ENCODE measurements at regions of chr6 and their contacts with region 1.

Region 1: GRCh38 chr6:157379656-157380454 is 1.1 kb upstream of the ZDHHC14 start:
- DNase-seq: peak; percentile 65
- ATAC-seq: peak; percentile 86
- H3K4me3 ChIP-seq: peak overlapping the region; percentile 98
- H3K27ac ChIP-seq: peak overlapping the region; percentile 50; the same call in 1 of the 2 replicates
- H3K4me1 ChIP-seq: no peaks in the 10 kb centered on the region
- H3K27me3 ChIP-seq: peaks cover 0 to 4% of the 10 kb centered on the region in 2 experiments; a peak in 1 of 4 replicates
- CTCF ChIP-seq: no peak
- EP300 ChIP-seq: no peak
- POLR2A ChIP-seq: 0 out of 2 replicates have a peak, but pooled peaks have one; percentile 42
- RAD21 ChIP-seq: no peak

Region 2: DNA sequence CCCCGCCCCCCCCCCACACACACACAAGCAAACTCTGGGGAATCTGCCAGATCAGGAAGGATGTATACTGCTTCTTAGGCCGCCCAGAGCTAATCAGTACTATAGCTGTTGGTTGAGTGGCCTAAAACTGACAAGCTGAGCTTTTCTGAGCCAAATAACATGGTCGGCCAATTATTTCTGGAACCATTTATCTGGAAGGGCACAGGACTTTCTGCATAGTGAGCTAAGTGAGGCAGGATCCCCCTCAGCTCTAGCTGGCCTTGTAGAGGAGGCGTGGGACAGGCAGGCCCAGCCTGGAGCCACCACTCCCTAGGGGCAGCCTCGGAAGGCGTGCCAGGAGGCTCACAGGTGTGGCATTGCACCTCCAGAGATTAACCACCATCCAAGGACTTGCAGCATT is 256.6 kb before region 1 on chr6:
- CTCF ChIA-PET with region 1: no interaction called
- POLR2A ChIA-PET with region 1: no interaction called
- RAD21 ChIA-PET with region 1: no interaction called
- SMC1A ChIA-PET with region 1: no interaction called
- in situ Hi-C with region 1: no loop called
- intact Hi-C with region 1: no loop called
- DNase-seq: no peak
- ATAC-seq: no peak
- H3K4me3 ChIP-seq: no peak overlapping the region
- H3K27ac ChIP-seq: no peak overlapping the region
- H3K4me1 ChIP-seq: no peaks in the 10 kb centered on the region
- H3K27me3 ChIP-seq: no peaks in the 10 kb centered on the region
- CTCF ChIP-seq: no peak
- EP300 ChIP-seq: no peak
- POLR2A ChIP-seq: no peak
- RAD21 ChIP-seq: no peak

Region 3: GRCh38 chr6:157368359-157369049 is 11.4 kb before region 1 on chr6:
- CTCF ChIA-PET with region 1: interaction called, 6 read pairs
- POLR2A ChIA-PET with region 1: interaction called, 16 read pairs
- RAD21 ChIA-PET with region 1: interaction called, 6 read pairs
- SMC1A ChIA-PET with region 1: interaction called, 17 read pairs
- in situ Hi-C with region 1: no loop called
- intact Hi-C with region 1: no loop called
- DNase-seq: no peak
- ATAC-seq: peak; percentile 49
- H3K4me3 ChIP-seq: no peak overlapping the region
- H3K27ac ChIP-seq: no peak overlapping the region
- H3K4me1 ChIP-seq: peaks cover 15% of the 10 kb centered on the region
- H3K27me3 ChIP-seq: peaks cover 0 to 12% of the 10 kb centered on the region in 2 experiments; a peak in 3 of 4 replicates
- CTCF ChIP-seq: no peak
- EP300 ChIP-seq: no peak
- POLR2A ChIP-seq: no peak
- RAD21 ChIP-seq: no peak

Region 4: DNA sequence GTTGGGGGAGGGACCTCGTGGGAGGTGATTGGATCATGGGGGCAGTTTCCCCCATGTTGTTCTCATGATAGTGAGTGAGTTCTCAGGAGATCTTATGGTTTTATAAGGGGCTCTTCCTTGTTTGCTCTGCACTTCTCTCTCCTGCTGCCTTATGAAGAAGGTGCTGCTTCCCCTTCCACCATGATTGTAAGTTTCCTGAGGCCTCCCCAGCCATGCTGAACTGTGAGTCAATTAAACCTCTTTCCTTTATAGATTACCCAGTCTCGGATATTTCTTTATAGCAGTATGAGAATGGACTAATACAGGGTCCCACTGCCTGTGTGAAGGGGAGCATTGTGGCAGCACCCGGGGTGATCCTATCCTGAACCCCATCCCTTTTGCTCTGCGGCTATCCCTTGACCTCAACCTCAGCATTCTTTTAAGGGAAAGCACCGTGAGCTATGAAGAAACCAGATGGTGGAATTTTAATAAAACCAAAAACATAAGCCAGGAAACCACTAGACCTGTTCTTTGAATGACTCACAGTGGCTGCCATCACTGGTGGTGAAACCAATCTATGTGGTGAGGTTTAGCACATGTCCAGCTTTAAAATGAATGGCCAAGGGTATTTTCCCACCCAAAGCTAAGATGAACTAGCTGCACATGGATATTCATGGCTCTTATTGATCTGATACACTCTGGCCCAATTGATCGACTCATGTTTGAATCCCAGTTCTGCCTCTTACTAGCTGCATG is 63.4 kb after region 1 on chr6:
- CTCF ChIA-PET with region 1: no interaction called
- POLR2A ChIA-PET with region 1: no interaction called
- RAD21 ChIA-PET with region 1: interaction called, 5 read pairs
- SMC1A ChIA-PET with region 1: interaction called, 6 read pairs
- in situ Hi-C with region 1: no loop called
- intact Hi-C with region 1: loop called (anchors 5 kb)
- DNase-seq: peak; percentile 80
- ATAC-seq: peak; percentile 97
- H3K4me3 ChIP-seq: no peak overlapping the region
- H3K27ac ChIP-seq: no peak overlapping the region
- H3K4me1 ChIP-seq: 0 out of 2 replicates have a peak, but pooled peaks cover 3% of the 10 kb centered on the region
- H3K27me3 ChIP-seq: no peaks in the 10 kb centered on the region
- CTCF ChIP-seq: no peak
- EP300 ChIP-seq: peak; percentile 84 to 87
- POLR2A ChIP-seq: no peak
- RAD21 ChIP-seq: no peak

Region 5: GRCh38 chr6:157535339-157536222 is 155.7 kb after region 1 on chr6:
- CTCF ChIA-PET with region 1: no interaction called
- POLR2A ChIA-PET with region 1: no interaction called
- RAD21 ChIA-PET with region 1: no interaction called
- SMC1A ChIA-PET with region 1: interaction called, 5 read pairs
- in situ Hi-C with region 1: no loop called
- intact Hi-C with region 1: loop called (anchors 5 kb)
- DNase-seq: peak; percentile 71
- ATAC-seq: peak; percentile 85
- H3K4me3 ChIP-seq: no peak overlapping the region
- H3K27ac ChIP-seq: no peak overlapping the region; the same call in 1 of the 2 replicates
- H3K4me1 ChIP-seq: peaks cover 8% of the 10 kb centered on the region; the same call in 1 of the 2 replicates
- H3K27me3 ChIP-seq: no peaks in the 10 kb centered on the region
- CTCF ChIP-seq: no peak
- EP300 ChIP-seq: peak; percentile 85 to 91; a peak in 3 of 4 replicates
- POLR2A ChIP-seq: no peak
- RAD21 ChIP-seq: no peak

Measured in GM12878 (cell line).